PC-3 (cell line): ENCODE measurements at regions of chr19 and their contacts with region 1.

Region 1: DNA sequence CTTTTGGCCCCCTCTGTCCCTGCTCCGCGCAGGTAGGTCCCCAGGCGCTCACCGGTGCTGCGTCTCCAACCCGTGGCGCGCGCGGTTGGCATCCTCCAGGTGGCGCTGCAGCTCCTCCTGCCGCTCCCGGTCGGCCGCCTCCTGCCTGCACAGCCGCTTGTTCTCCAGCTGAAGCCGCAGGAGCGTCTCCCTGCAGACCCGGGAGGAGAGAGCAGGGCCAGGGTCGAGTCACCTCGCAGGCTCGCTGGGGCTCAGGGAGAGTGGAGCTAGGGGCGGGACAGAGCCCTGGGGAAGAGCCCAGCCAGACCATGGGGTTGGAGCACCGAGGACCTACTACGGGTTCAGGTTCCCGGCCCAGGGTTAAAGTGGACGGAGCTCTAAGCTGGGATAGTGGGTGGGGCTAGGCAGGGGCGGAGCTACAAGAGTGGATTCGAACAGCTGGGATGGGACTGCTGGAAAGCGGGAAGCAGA is 9.3 kb downstream of the HOOK2 start:
- DNase-seq: peak; percentile 79
- ATAC-seq: peak; percentile 92
- H3K4me3 ChIP-seq: peak overlapping the region; percentile 67
- H3K27ac ChIP-seq: no peak overlapping the region
- H3K4me1 ChIP-seq: no peaks in the 10 kb centered on the region
- H3K27me3 ChIP-seq: no peaks in the 10 kb centered on the region
- CTCF ChIP-seq: peak; percentile 81

Region 2: DNA sequence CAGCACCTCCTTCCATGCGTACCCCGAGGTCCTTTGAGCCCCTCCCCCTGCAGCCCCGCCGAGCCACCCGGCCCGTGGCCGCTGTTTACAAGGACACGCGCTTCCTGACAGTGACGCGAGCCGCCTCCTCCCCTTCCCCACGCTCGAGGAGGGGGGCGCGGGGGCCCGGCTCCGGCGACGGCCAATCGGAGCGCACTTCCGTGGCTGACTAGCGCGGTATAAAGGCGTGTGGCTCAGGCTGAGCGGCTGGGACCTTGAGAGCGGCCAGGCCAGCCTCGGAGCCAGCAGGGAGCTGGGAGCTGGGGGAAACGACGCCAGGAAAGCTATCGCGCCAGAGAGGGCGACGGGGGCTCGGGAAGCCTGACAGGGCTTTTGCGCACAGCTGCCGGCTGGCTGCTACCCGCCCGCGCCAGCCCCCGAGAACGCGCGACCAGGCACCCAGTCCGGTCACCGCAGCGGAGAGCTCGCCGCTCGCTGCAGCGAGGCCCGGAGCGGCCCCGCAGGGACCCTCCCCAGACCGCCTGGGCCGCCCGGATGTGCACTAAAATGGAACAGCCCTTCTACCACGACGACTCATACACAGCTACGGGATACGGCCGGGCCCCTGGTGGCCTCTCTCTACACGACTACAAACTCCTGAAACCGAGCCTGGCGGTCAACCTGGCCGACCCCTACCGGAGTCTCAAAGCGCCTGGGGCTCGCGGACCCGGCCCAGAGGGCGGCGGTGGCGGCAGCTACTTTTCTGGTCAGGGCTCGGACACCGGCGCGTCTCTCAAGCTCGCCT is 25.3 kb after region 1 on chr19 and contains the start of gene JUNB:
- CTCF ChIA-PET with region 1: interaction called, 12 read pairs
- POLR2A ChIA-PET with region 1: interaction called, 3 read pairs
- intact Hi-C with region 1: no loop called
- DNase-seq: peak; percentile 99
- ATAC-seq: peak; percentile 43
- H3K4me3 ChIP-seq: peak within 1 kb of the TSS; percentile 90
- H3K27ac ChIP-seq: peak within 1 kb of the TSS; percentile 95
- H3K4me1 ChIP-seq: peaks cover 51% of the 10 kb centered on the region
- H3K27me3 ChIP-seq: no peaks in the 10 kb centered on the region
- CTCF ChIP-seq: no peak
- total RNA-seq, gene JUNB: 343 and 391 TPM in 2 replicates

Region 3: DNA sequence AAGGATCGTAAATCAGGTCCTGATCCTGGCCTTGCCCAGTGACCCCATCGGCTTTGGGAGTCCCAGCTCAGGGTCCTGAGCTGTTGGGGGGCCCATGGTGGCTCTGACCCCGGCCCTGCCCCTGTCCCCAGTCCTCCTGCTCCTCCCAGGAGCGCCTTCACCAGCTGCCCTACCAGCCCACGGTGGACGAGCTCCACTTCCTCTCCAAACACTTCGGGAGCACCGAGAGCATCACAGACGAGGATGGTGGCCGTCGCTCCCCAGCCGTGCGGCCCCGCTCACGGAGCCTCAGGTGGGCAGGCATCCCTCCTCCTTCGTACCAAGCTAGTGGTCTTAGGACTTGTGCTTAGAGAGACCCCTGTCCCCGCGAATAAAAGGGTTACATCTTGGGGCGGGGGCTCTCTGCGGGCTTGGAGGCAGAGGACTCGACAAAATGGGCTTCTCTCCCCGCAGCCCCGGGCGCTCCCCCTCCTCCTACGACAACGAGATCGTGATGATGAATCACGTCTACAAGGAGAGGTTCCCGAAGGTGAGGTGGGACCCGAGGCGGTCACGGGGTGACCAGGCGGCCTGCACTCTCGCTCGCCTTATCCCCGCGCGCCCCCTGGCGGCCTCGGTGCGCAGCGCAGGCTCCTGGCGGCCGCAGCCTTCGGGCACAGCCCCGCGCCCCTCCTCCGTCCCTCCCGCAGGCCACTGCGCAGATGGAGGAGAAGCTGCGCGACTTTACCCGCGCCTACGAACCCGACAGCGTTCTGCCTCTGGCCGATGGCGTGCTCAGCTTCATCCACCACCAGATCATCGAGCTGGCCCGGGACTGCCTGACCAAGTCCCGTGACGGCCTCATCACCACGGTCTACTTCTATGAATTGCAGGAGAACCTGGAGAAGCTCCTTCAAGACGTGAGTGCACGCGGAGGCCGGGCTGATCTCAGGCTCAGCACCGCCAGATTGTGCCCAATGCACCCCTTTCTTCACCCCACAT is 81.4 kb after region 1 on chr19:
- CTCF ChIA-PET with region 1: interaction called, 3 read pairs
- POLR2A ChIA-PET with region 1: no interaction called
- intact Hi-C with region 1: loop called (anchors 5 kb)
- DNase-seq: peak; percentile 94
- ATAC-seq: peak; percentile 97
- H3K4me3 ChIP-seq: peak overlapping the region; percentile 42; the same call in 1 of the 2 replicates
- H3K27ac ChIP-seq: no peak overlapping the region
- H3K4me1 ChIP-seq: peaks cover 14% of the 10 kb centered on the region
- H3K27me3 ChIP-seq: no peaks in the 10 kb centered on the region
- CTCF ChIP-seq: peak; percentile 99